Panc1 (cell line): ENCODE measurements at regions of chr16 and their contacts with region 1.

Region 1: GRCh38 chr16:14586637-14587305 is 43.3 kb downstream of the PARN start:
- DNase-seq: no peak
- ATAC-seq: no peak
- H3K4me3 ChIP-seq: no peak overlapping the region
- H3K27ac ChIP-seq: no peak overlapping the region
- H3K4me1 ChIP-seq: no peaks in the 10 kb centered on the region
- H3K27me3 ChIP-seq: no peaks in the 10 kb centered on the region
- CTCF ChIP-seq: no peak

Region 2: GRCh38 chr16:14510939-14511799 is 75.6 kb before region 1 on chr16:
- CTCF ChIA-PET with region 1: no interaction called
- POLR2A ChIA-PET with region 1: no interaction called
- in situ Hi-C with region 1: no loop called
- intact Hi-C with region 1: no loop called
- DNase-seq: no peak
- ATAC-seq: no peak
- H3K4me3 ChIP-seq: no peak overlapping the region
- H3K27ac ChIP-seq: no peak overlapping the region
- H3K4me1 ChIP-seq: 0 out of 2 replicates have a peak, but pooled peaks cover under 1% of the 10 kb centered on the region
- H3K27me3 ChIP-seq: no peaks in the 10 kb centered on the region
- CTCF ChIP-seq: no peak

Region 3: DNA sequence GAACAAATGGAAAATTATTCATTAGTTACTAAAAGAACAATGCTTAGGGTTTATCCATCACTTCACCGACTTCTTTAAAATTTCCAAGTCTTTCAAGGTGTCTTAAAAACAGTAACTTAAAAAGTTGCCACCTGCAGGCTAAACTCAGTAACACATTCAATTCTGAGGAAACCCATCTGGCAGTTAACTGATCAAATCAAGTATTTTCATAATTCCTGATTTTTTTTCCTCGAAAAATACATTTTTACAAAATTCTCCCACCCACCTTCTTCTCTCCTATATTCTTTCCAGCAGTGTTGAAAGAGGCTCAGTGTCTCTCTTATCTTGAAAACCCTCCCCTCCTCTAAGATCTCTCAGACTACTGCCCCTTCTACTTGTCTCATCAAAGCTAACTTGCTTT is 13.4 kb after region 1 on chr16:
- CTCF ChIA-PET with region 1: interaction called, 17 read pairs
- POLR2A ChIA-PET with region 1: interaction called, 3 read pairs
- in situ Hi-C with region 1: no loop called
- intact Hi-C with region 1: no loop called
- DNase-seq: peak; percentile 17
- ATAC-seq: peak; percentile 65; the same call in 1 of the 2 replicates
- H3K4me3 ChIP-seq: no peak overlapping the region
- H3K27ac ChIP-seq: no peak overlapping the region
- H3K4me1 ChIP-seq: no peaks in the 10 kb centered on the region
- H3K27me3 ChIP-seq: no peaks in the 10 kb centered on the region
- CTCF ChIP-seq: no peak

Region 4: GRCh38 chr16:15942931-15943690 is 1356.3 kb after region 1 on chr16:
- CTCF ChIA-PET with region 1: no interaction called
- POLR2A ChIA-PET with region 1: interaction called, 17 read pairs
- in situ Hi-C with region 1: no loop called
- intact Hi-C with region 1: no loop called
- DNase-seq: no peak
- ATAC-seq: no peak
- H3K4me3 ChIP-seq: no peak overlapping the region
- H3K27ac ChIP-seq: peak overlapping the region; percentile 62
- H3K4me1 ChIP-seq: peaks cover 34% of the 10 kb centered on the region
- H3K27me3 ChIP-seq: no peaks in the 10 kb centered on the region
- CTCF ChIP-seq: no peak